ENCODE measurements at regions of chr9 and their contacts with region 1.

Region 1: DNA sequence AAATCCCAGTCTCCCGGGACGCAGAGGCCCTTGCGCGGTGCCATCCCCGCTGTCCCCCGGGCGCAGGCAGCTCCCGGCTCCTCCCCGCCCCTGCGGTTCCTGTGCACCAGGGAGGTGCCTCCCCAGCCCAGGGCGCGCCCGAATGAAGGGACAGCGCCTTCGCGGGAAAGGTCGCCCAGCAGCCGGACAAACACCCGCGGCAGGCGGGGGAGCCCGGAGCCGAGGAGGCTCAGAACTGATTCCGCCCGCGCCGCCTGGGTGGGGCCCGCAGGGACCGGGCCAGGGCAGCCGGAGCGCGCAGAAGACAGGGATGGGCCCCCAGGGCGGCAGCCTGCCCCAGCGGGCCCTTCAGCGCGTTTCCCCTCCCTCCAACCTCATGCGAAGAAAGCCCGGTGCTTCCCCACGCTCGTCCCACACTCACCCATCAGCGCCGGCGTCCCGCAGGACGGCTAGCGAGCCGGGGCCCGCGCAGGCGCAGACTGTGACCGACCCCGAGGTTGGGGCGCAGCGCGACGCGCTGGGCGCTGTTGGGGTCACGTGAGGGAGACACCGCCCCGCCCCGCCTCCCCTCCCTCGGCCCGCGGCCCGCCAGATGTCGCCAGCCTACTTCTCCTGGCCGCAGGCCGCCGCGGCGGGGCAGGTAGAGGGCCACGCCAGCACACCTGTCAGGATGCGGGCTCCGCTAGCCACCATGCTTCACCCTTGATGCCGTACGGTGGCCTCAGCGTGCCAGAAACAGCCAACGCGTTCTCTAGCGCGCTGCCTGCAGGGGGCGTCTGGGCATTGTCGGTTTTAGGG is at the start of gene SLC25A51:
- DNase-seq: peak; percentile 96
- ATAC-seq: peak; percentile 89
- H3K4me3 Mint-ChIP-seq: peak within 1 kb of the TSS; percentile 87
- H3K27ac Mint-ChIP-seq: peak within 1 kb of the TSS; percentile 92
- H3K4me1 Mint-ChIP-seq: peaks cover 32% of the 10 kb centered on the region
- H3K27me3 Mint-ChIP-seq: no peaks in the 10 kb centered on the region
- total RNA-seq, gene SLC25A51: 31.7 to 33.6 TPM

Region 2: GRCh38 chr9:37976714-37977477 is 73.0 kb after region 1 on chr9:
- CTCF ChIA-PET with region 1: no interaction called
- POLR2A ChIA-PET with region 1: no interaction called
- DNase-seq: no peak
- ATAC-seq: no peak
- H3K4me3 Mint-ChIP-seq: no peak overlapping the region
- H3K27ac Mint-ChIP-seq: no peak overlapping the region
- H3K4me1 Mint-ChIP-seq: no peaks in the 10 kb centered on the region
- H3K27me3 Mint-ChIP-seq: peaks cover 4% of the 10 kb centered on the region

Region 3: DNA sequence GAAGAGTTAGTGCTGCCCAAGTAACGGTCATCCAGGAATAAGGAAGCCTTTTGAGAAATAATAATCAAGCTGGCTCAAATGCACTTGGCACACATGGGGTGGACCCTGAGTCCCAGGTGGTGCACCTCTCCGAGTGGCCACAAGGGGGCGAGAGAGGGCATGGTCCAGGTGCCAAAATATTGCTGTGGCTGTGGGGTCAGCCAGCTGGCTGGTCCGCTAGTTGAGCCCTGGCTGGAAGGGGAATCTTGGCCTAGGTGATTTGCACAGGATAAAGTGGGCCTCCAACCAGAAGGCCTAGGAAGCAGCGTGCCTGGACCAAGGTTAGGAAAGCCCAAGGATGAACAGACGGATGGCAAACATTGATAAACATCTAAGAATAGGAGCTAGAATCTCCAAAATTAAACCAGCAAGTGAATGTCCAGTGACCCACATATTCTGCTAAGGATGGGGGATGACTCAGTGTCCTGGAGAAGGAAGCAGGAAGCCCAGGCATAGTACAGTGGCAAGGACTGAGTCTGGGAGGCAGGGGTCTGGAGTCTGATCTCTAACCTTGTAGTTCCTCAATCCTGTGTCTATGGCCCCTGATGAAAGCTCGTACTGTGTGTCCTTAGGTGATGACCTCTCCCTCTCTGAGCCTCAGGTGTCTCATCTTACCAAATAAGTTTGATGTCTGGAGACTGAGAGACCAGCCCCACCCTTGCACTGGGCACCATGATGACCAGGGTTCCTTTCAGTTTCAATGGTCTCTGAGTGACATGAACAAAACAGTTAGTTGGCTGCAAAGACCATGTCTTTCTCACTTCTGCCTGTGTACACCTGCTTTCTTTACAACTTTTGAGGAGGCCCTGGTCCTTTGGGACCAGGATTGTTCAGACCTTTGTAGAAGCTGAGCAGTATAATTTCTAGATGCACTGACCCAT is 184.4 kb after region 1 on chr9:
- CTCF ChIA-PET with region 1: interaction called, 14 read pairs
- POLR2A ChIA-PET with region 1: no interaction called
- DNase-seq: peak; percentile 78
- ATAC-seq: peak; percentile 72
- H3K4me3 Mint-ChIP-seq: no peak overlapping the region
- H3K27ac Mint-ChIP-seq: no peak overlapping the region
- H3K4me1 Mint-ChIP-seq: no peaks in the 10 kb centered on the region
- H3K27me3 Mint-ChIP-seq: peaks cover 14% of the 10 kb centered on the region